IMR-90 (cell line): ENCODE measurements at regions of chr1 and their contacts with region 1.

Region 1: DNA sequence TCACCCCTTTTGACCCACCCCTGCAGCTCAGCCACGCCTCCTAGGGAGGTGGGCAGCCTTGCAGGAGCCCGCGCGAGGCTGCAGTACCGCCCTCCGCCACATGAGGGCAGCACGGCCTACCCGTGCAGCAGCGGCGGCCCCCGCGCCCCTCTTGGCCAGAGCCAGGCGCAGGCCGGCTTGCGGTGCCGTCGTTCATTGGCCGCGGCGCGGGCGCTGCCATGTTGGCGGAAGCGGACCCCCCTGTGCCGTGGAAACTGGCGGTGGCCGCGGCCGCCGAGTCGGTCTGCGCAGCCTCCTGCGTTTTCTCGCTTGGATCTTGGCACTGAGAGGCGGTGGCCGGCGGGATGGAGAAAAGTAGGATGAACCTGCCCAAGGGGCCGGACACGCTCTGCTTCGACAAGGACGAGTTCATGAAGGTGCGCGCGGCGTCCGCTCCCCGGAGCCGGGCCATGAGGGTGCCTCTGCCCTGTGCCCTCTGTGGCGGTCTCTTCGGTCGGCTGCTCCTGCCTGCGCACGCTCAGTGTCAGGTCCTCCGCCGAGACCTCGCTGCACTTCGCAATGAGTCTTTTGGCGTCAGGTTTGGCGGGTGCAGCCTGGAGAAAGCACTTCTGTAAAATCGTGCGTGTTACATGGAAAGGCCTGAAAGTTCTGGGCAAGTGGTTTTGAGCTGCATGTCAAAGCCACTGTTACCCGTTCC is at the start of gene COG2:
- DNase-seq: peak; percentile 90
- ATAC-seq: peak; percentile 99
- H3K4me3 ChIP-seq: peak within 1 kb of the TSS; percentile 99
- H3K27ac ChIP-seq: peak within 1 kb of the TSS; percentile 77
- H3K4me1 ChIP-seq: peaks cover 4% of the 10 kb centered on the region
- H3K27me3 ChIP-seq: peaks cover 10% of the 10 kb centered on the region; the same call in 1 of the 2 replicates
- CTCF ChIP-seq: peak; percentile 99
- POLR2A ChIP-seq: peak; percentile 76
- RAD21 ChIP-seq: peak; percentile 64
- total RNA-seq, gene COG2: 16.7 and 17.8 TPM in 2 replicates

Region 2: GRCh38 chr1:230191079-230191804 is 451.2 kb before region 1 on chr1:
- CTCF ChIA-PET with region 1: no interaction called
- POLR2A ChIA-PET with region 1: no interaction called
- dilution Hi-C with region 1: no loop called
- in situ Hi-C with region 1: no loop called
- intact Hi-C with region 1: no loop called
- DNase-seq: peak; percentile 74
- ATAC-seq: peak; percentile 78
- H3K4me3 ChIP-seq: no peak overlapping the region
- H3K27ac ChIP-seq: no peak overlapping the region
- H3K4me1 ChIP-seq: peaks cover 1% of the 10 kb centered on the region; the same call in 1 of the 2 replicates
- H3K27me3 ChIP-seq: no peaks in the 10 kb centered on the region
- CTCF ChIP-seq: no peak
- POLR2A ChIP-seq: no peak
- RAD21 ChIP-seq: no peak

Region 3: DNA sequence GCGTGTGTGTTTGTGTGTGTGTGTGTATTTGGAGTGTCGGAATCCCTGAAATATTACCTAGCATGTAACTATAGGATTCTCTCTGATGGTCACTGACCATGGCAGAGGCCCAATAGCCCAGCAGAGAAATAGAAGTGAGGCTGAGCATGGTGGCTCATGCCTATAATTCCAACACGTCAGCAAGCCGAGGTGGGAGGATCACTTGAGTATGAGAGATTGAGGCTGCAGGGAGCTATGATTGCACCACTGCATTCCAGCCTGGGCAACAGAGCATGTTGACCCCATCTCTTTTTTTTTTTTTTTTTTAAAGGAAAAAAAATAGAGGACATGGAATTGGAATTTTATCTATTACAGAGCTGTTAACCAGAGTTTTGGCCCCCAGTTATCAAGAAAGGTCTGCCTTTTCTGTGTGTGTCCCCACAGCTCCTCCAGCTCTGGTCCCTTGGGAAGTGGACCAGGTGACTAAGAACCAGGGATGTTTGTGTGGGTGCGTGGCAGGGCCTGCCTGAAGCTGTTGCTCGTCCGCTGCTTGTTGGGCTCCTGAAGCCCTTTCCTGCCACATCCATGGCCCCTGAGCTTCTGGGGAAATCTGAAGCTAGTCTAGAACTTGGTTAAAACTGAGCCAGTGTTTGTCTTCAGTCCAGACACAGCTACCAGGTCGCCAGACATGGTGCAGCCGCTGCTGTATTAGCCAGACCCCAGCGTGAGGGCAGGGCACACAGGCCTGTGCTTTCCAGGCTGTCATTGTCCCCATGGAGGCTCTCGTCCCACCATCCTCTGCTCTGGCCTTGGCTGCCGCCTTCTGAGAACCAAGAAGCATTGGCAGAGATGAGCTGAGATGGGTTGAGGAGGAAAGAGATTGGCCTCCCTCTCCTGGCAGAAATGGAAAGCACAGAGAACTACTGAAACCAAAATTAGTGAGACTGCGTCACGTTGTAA is 130.3 kb after region 1 on chr1:
- CTCF ChIA-PET with region 1: interaction called, 10 read pairs
- POLR2A ChIA-PET with region 1: no interaction called
- dilution Hi-C with region 1: no loop called
- in situ Hi-C with region 1: loop called (anchors 10 kb)
- intact Hi-C with region 1: loop called (anchors 1 kb)
- DNase-seq: peak; percentile 59
- ATAC-seq: peak; percentile 74
- H3K4me3 ChIP-seq: no peak overlapping the region
- H3K27ac ChIP-seq: peak overlapping the region; percentile 63; the same call in 1 of the 2 replicates
- H3K4me1 ChIP-seq: peaks cover 13% of the 10 kb centered on the region
- H3K27me3 ChIP-seq: peaks cover 2% of the 10 kb centered on the region; the same call in 1 of the 2 replicates
- CTCF ChIP-seq: peak; percentile 63
- POLR2A ChIP-seq: no peak
- RAD21 ChIP-seq: peak; percentile 65

Region 4: DNA sequence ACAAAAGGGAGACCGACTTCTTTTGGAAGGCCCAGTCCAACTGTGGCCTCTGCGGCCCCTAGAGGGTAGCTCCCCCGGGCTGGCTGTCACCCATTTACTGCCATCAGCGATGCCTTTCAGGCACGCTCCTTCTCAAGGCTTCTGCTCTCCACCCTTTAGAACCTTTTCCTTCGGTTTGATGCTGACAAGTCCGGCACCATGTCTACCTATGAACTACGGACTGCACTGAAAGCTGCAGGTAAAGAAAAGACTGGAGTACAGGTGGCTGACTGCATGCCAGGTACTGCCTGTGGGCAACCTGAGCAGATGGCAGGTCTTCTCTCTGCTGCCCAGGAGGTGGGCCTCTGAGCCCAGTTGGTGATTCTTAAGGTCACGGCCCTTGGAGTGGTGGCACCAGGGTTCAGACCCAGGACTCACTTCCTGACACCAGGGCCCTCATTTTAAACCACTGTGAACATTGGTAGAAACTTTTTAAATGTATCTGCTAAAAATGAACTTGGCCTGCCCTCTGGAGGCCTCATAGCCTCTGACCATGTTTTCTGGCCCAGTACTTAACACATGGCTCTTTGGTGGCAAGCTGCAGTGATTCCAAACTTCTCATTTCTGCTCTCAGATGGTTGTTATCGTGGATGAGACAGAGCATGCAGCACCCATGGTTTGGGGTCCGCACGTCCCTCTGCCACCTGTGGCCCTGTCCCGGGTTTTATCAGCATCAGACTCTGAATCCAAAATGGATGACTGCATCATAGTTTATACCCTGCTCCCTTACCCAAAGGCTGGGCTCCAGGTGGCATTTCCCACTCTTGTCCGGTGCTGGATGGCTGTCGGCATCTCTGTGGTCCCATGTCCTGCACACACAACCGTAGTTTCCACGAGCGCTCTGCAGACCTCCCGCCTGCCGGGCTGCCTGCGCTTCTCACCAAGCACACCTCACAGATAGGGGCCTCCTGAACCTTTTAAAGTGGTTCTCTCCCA is 150.6 kb after region 1 on chr1:
- CTCF ChIA-PET with region 1: no interaction called
- POLR2A ChIA-PET with region 1: no interaction called
- dilution Hi-C with region 1: no loop called
- in situ Hi-C with region 1: no loop called
- intact Hi-C with region 1: loop called (anchors 5 kb)
- DNase-seq: peak; percentile 11
- ATAC-seq: no peak
- H3K4me3 ChIP-seq: no peak overlapping the region
- H3K27ac ChIP-seq: no peak overlapping the region
- H3K4me1 ChIP-seq: no peaks in the 10 kb centered on the region
- H3K27me3 ChIP-seq: no peaks in the 10 kb centered on the region; the same call in none of the 2 replicates
- CTCF ChIP-seq: peak; percentile 33; the same call in 1 of the 2 replicates
- POLR2A ChIP-seq: no peak
- RAD21 ChIP-seq: peak; percentile 25; the same call in 1 of the 2 replicates

Region 5: GRCh38 chr1:230909974-230910754 is 267.8 kb after region 1 on chr1:
- CTCF ChIA-PET with region 1: no interaction called
- POLR2A ChIA-PET with region 1: no interaction called
- dilution Hi-C with region 1: no loop called
- in situ Hi-C with region 1: no loop called
- intact Hi-C with region 1: loop called (anchors 5 kb)
- DNase-seq: no peak
- ATAC-seq: no peak
- H3K4me3 ChIP-seq: no peak overlapping the region
- H3K27ac ChIP-seq: no peak overlapping the region
- H3K4me1 ChIP-seq: peaks cover 7% of the 10 kb centered on the region
- H3K27me3 ChIP-seq: no peaks in the 10 kb centered on the region
- CTCF ChIP-seq: no peak
- POLR2A ChIP-seq: no peak
- RAD21 ChIP-seq: no peak

Region 6: GRCh38 chr1:230978491-230979388 is 336.3 kb after region 1 on chr1 and contains the starts of genes ARV1 and TTC13:
- CTCF ChIA-PET with region 1: no interaction called
- POLR2A ChIA-PET with region 1: no interaction called
- dilution Hi-C with region 1: no loop called
- in situ Hi-C with region 1: no loop called
- intact Hi-C with region 1: loop called (anchors 1 kb)
- DNase-seq: peak; percentile 98
- ATAC-seq: peak; percentile 99
- H3K4me3 ChIP-seq: peak within 1 kb of the TSS; percentile 68
- H3K27ac ChIP-seq: peak within 1 kb of the TSS; percentile 71
- H3K4me1 ChIP-seq: peaks cover 6% of the 10 kb centered on the region
- H3K27me3 ChIP-seq: no peaks in the 10 kb centered on the region
- CTCF ChIP-seq: peak; percentile 13; the same call in 1 of the 2 replicates
- POLR2A ChIP-seq: 0 out of 2 replicates have a peak, but pooled peaks have one; percentile 26
- RAD21 ChIP-seq: peak; percentile 25
- total RNA-seq, gene ARV1: 19.0 and 26.7 TPM in 2 replicates
- total RNA-seq, gene TTC13: 8.9 and 9.1 TPM in 2 replicates

Region 7: DNA sequence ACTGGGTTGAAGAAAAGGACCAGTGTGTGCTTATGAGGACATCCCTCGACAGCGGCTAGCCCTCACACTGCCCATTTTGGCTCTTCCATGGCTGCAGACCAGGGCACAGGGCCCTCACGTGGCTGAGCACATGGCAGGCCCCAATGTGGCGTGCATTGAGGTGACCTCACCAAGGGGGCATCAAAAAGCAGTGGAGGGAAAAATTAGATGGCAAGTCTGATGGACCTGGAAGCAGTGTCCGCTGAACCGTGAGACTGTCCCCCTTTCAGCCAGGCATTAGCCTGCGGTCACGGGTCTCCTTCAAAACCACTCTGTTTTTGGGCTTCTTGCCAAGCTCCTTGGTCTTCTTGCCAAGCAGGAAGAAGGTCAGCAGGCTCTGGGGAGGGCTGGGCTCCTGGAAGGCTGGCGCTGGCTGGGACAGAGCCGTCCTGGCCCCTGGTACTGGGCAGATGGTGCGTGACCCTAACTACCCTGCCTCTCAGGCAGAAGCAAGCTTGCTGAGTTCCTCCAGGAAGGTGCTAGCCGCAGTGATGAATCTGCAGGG is 550.3 kb after region 1 on chr1:
- CTCF ChIA-PET with region 1: no interaction called
- POLR2A ChIA-PET with region 1: no interaction called
- dilution Hi-C with region 1: no loop called
- in situ Hi-C with region 1: no loop called
- intact Hi-C with region 1: no loop called
- DNase-seq: no peak
- ATAC-seq: no peak
- H3K4me3 ChIP-seq: no peak overlapping the region
- H3K27ac ChIP-seq: no peak overlapping the region
- H3K4me1 ChIP-seq: no peaks in the 10 kb centered on the region
- H3K27me3 ChIP-seq: peaks cover 13% of the 10 kb centered on the region; the same call in 1 of the 2 replicates
- CTCF ChIP-seq: no peak
- POLR2A ChIP-seq: no peak
- RAD21 ChIP-seq: no peak